CD4-positive, alpha-beta memory T cell (primary cell): ENCODE measurements at regions of chr5 and their contacts with region 1.

Region 1: GRCh38 chr5:178626484-178627258 is at the start of gene CLK4:
- DNase-seq: peak; percentile 94 to 98 (median 96)
- H3K4me3 ChIP-seq: peak within 1 kb of the TSS; percentile 79 to 96
- H3K4me3 Mint-ChIP-seq: peak within 1 kb of the TSS; percentile 95 to 100 (median 98)
- H3K27ac ChIP-seq: peak within 1 kb of the TSS; percentile 98
- H3K27ac Mint-ChIP-seq: peak within 1 kb of the TSS; percentile 99 to 100 (median 100)
- H3K4me1 ChIP-seq: peaks cover 42% of the 10 kb centered on the region
- H3K4me1 Mint-ChIP-seq: peaks cover 23 to 49% (median 33%) of the 10 kb centered on the region in 4 donors
- H3K27me3 ChIP-seq: no peaks in the 10 kb centered on the region
- H3K27me3 Mint-ChIP-seq: no peaks in the 10 kb centered on the region
- total RNA-seq, gene CLK4: 121 to 125 TPM

Region 2: DNA sequence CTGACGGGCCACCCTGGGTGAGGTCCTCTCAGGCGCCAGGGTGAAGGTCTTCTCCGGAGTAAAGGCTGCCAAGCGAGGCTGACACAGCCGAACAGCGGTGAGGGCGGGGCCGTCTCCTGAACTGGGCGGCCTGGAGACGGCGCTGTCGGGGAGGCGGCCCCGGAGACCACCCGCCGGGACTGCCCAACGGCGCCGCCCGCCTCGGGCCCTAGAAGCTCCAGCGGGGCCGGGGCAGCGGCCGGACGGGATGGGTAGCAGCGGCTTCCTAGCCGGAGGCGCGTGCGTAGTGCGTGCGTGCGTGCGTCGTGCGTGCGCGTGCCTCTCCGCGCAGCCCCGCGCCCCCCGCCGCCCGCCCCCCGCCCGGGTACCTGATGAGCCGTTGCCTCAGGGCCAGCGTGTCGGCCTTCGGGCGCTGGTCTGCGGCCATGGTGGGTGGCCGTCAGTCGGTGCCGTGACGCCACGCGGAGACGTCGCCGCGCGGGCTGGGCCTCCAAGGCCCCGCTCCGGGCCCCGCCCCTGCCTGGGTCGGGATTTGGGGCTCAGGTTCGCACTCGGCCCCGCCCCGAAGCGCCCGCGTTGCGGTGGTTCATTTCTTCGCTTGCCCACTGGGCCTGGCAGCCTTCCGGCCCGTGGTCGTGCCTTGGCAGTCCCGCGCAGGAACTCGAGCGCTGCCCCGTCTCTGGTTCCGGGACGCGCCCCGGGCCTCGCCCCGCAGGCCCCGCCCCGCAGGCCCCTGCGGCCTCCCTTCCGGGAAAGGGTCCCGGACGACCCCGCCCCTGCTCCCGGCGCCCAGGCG is 394.3 kb before region 1 on chr5 and contains the start of gene PHYKPL:
- CTCF ChIA-PET with region 1: no interaction called
- POLR2A ChIA-PET with region 1: no interaction called
- intact Hi-C with region 1: loop called (anchors 10 kb)
- DNase-seq: peak; percentile 61 to 71 (median 65)
- H3K4me3 ChIP-seq: peak within 1 kb of the TSS; percentile 62 to 74
- H3K4me3 Mint-ChIP-seq: peak within 1 kb of the TSS; percentile 82 to 90 (median 86)
- H3K27ac ChIP-seq: peak within 1 kb of the TSS; percentile 82
- H3K27ac Mint-ChIP-seq: peak within 1 kb of the TSS; percentile 87 to 95 (median 91)
- H3K4me1 ChIP-seq: peaks cover 49% of the 10 kb centered on the region
- H3K4me1 Mint-ChIP-seq: peaks cover 25 to 74% (median 56%) of the 10 kb centered on the region in 4 donors
- H3K27me3 ChIP-seq: no peaks in the 10 kb centered on the region
- H3K27me3 Mint-ChIP-seq: no peaks in the 10 kb centered on the region
- total RNA-seq, gene PHYKPL: 234 to 251 TPM

Region 3: GRCh38 chr5:178372142-178372571 is 254.5 kb before region 1 on chr5:
- CTCF ChIA-PET with region 1: no interaction called
- POLR2A ChIA-PET with region 1: no interaction called
- intact Hi-C with region 1: no loop called
- DNase-seq: no peak
- H3K4me3 ChIP-seq: no peak overlapping the region
- H3K4me3 Mint-ChIP-seq: no peak overlapping the region
- H3K27ac ChIP-seq: no peak overlapping the region
- H3K27ac Mint-ChIP-seq: no peak overlapping the region
- H3K4me1 ChIP-seq: no peaks in the 10 kb centered on the region
- H3K4me1 Mint-ChIP-seq: no peaks in the 10 kb centered on the region
- H3K27me3 ChIP-seq: no peaks in the 10 kb centered on the region
- H3K27me3 Mint-ChIP-seq: peaks cover 7 to 11% of the 10 kb centered on the region in 2 donors

Region 4: GRCh38 chr5:178859625-178860531 is 233.2 kb after region 1 on chr5 and contains the start of gene ZNF354B:
- CTCF ChIA-PET with region 1: no interaction called
- POLR2A ChIA-PET with region 1: interaction called, 3 read pairs
- intact Hi-C with region 1: loop called (anchors 1 kb)
- DNase-seq: peak; percentile 82 to 90 (median 85)
- H3K4me3 ChIP-seq: peak within 1 kb of the TSS; percentile 48 to 66
- H3K4me3 Mint-ChIP-seq: peak within 1 kb of the TSS; percentile 89 to 97 (median 94)
- H3K27ac ChIP-seq: peak within 1 kb of the TSS; percentile 40
- H3K27ac Mint-ChIP-seq: peak within 1 kb of the TSS; percentile 85 to 95 (median 92)
- H3K4me1 ChIP-seq: peaks cover 22% of the 10 kb centered on the region
- H3K4me1 Mint-ChIP-seq: peaks cover 18 to 33% (median 25%) of the 10 kb centered on the region in 4 donors
- H3K27me3 ChIP-seq: no peaks in the 10 kb centered on the region
- H3K27me3 Mint-ChIP-seq: no peaks in the 10 kb centered on the region
- total RNA-seq, gene ZNF354B: 31.3 to 32.4 TPM

Region 5: DNA sequence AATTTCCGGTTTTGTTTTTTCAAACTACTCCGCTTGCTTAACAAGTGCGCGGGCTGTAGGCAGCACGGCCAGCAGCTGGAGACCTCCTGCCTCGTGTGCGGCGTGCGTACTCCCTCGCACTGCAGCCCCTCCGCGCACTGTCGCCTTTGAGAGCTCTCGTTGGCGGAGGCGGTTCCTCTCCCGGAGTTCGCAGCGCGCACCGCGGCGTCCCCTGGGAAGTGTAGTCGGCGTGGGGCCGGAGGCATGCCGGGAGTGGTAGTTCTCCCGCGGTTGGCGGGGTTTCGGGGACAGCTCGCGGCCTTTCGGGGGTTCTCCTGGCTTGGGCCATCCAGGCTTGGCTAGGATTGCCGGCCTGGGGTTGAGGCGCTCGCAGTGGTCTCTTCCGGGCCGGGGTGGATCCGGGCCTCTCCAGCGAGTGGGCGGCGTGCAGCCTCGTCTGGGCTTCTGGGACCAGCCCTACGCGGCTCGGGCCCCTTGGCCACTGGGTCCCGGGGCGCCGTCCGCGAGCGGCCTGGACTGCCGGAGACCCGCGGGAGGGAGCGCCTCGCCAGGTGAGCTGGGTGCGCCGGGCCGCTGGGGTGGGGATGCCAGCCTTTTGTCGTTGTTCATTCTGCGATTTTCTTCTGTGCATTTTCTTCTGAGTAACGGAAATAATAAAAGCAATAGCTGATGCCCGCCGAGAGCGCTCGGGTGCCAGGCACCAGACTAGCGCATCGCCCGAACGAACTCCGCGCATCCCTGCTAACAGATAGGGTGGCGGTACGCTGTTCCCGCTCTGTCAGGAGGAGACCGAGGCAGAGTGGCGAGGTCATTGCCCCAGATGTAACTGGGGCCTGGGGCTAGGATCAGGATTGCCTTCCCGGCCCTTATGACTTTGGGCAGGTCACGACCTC is 433.7 kb after region 1 on chr5 and contains the start of gene ZNF354C:
- CTCF ChIA-PET with region 1: no interaction called
- POLR2A ChIA-PET with region 1: interaction called, 8 read pairs
- intact Hi-C with region 1: loop called (anchors 1 kb)
- DNase-seq: peak; percentile 82 to 86 (median 84)
- H3K4me3 ChIP-seq: peak within 1 kb of the TSS; percentile 54 to 61
- H3K4me3 Mint-ChIP-seq: peak within 1 kb of the TSS; percentile 90 to 99 (median 94)
- H3K27ac ChIP-seq: peak within 1 kb of the TSS; percentile 70
- H3K27ac Mint-ChIP-seq: peak within 1 kb of the TSS; percentile 82 to 96 (median 94)
- H3K4me1 ChIP-seq: peaks cover 14% of the 10 kb centered on the region
- H3K4me1 Mint-ChIP-seq: peaks cover 14 to 36% (median 27%) of the 10 kb centered on the region in 4 donors
- H3K27me3 ChIP-seq: no peaks in the 10 kb centered on the region
- H3K27me3 Mint-ChIP-seq: peaks cover 0 to 1% of the 10 kb centered on the region in 2 donors
- total RNA-seq, gene ZNF354C: 11.2 to 11.3 TPM

Region 6: GRCh38 chr5:180494060-180494509 is 1867.4 kb after region 1 on chr5 and contains the start of gene CNOT6:
- CTCF ChIA-PET with region 1: no interaction called
- POLR2A ChIA-PET with region 1: no interaction called
- intact Hi-C with region 1: loop called (anchors 5 kb)
- DNase-seq: peak; percentile 92 to 97 (median 96)
- H3K4me3 ChIP-seq: peak within 1 kb of the TSS; percentile 17 to 72
- H3K4me3 Mint-ChIP-seq: peak within 1 kb of the TSS; percentile 91 to 98 (median 94)
- H3K27ac ChIP-seq: peak within 1 kb of the TSS; percentile 84
- H3K27ac Mint-ChIP-seq: peak within 1 kb of the TSS; percentile 91 to 99 (median 96)
- H3K4me1 ChIP-seq: peaks cover 42% of the 10 kb centered on the region
- H3K4me1 Mint-ChIP-seq: peaks cover 24 to 46% (median 38%) of the 10 kb centered on the region in 4 donors
- H3K27me3 ChIP-seq: no peaks in the 10 kb centered on the region
- H3K27me3 Mint-ChIP-seq: no peaks in the 10 kb centered on the region
- total RNA-seq, gene CNOT6: 30.1 to 37.8 TPM